Activated CD4-positive, alpha-beta memory T cell treated with anti-CD3 and anti-CD28 coated beads, Interleukin-2, amount 10 ng/mL, durations not matched to agents 7 days and 5 days (primary cell): ENCODE measurements at regions of chr19 and their contacts with region 1.

Region 1: GRCh38 chr19:16371540-16371986 is 46.9 kb downstream of the KLF2 start:
- DNase-seq: peak; percentile 96
- H3K4me3 Mint-ChIP-seq: no peak overlapping the region
- H3K27ac Mint-ChIP-seq: no peak overlapping the region
- H3K4me1 Mint-ChIP-seq: peaks cover 7% of the 10 kb centered on the region
- H3K27me3 Mint-ChIP-seq: peaks cover 2% of the 10 kb centered on the region

Region 2: DNA sequence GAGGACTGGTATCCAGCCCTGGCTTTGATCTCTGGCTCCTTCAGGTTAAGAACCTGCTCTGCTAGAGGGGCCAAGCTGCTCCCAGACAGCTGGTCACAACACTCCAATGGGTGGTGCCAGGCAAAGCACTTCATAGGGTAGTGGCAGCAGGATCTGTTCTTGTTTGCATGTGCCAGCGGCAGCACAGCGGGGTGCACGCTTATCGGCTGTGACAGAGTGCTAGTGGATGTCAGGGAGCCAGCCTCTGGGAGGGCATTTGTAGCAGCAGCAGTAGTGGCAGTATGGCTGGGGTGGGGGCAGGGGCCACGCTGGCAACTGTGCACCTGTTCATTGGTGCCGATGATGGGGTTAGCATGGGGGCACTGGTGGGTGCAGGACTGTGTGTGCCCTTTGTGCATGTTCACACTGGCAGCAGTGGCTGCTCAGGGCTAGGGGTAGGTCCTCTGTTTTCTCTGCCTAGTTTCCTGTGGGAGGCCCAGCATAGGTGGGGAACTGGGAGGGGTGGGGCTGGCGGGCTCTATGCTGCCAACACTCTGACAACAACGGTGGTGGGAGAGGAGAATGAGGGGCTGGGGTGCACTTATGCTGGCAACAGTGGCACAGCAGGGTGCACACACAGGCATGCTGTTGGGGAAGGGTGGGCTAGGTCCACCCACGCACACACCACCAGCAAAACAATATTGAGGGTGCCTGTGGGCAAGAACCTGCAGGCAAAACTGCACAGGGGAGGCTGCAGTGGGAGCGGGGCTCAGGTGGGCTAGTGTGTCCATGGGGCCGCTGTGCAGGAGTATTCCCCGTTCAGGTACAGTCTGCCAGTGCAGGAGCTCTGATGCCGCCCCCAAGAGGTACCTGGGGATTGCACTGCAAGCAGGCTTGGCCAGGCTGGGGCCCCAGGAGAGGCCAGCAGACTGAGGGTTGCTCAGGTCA is 154.6 kb before region 1 on chr19:
- CTCF ChIA-PET with region 1: no interaction called
- POLR2A ChIA-PET with region 1: no interaction called
- DNase-seq: no peak
- H3K4me3 Mint-ChIP-seq: no peak overlapping the region
- H3K27ac Mint-ChIP-seq: peak overlapping the region; percentile 60
- H3K4me1 Mint-ChIP-seq: peaks cover 29% of the 10 kb centered on the region
- H3K27me3 Mint-ChIP-seq: no peaks in the 10 kb centered on the region

Region 3: DNA sequence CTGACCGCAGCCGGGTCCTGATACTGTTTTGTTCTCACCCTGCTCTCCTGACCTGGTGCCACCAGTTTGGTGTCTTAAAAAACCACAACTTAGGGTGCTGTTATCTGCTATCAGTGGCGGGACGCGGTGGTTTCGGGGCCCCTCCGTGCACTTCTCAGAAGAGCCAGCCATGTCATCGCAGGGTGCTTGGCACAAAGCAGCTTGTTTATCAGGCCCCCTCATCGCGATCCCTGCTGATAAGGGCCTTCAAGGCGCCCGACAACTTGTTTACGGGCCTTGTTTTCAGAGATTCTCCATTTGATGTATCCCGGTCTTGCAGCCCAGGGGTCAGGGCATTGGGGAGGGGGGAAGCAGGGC is 105.0 kb before region 1 on chr19:
- CTCF ChIA-PET with region 1: no interaction called
- POLR2A ChIA-PET with region 1: interaction called, 23 read pairs
- DNase-seq: peak; percentile 86
- H3K4me3 Mint-ChIP-seq: peak overlapping the region; percentile 2
- H3K27ac Mint-ChIP-seq: peak overlapping the region; percentile 76
- H3K4me1 Mint-ChIP-seq: peaks cover 62% of the 10 kb centered on the region
- H3K27me3 Mint-ChIP-seq: peaks cover 11% of the 10 kb centered on the region

Region 4: GRCh38 chr19:16338470-16339360 is 32.8 kb before region 1 on chr19:
- CTCF ChIA-PET with region 1: interaction called, 34 read pairs
- POLR2A ChIA-PET with region 1: interaction called, 3,221 read pairs
- DNase-seq: peak; percentile 83
- H3K4me3 Mint-ChIP-seq: peak overlapping the region; percentile 67
- H3K27ac Mint-ChIP-seq: peak overlapping the region; percentile 85
- H3K4me1 Mint-ChIP-seq: peaks cover 70% of the 10 kb centered on the region
- H3K27me3 Mint-ChIP-seq: peaks cover 4% of the 10 kb centered on the region

Region 5: DNA sequence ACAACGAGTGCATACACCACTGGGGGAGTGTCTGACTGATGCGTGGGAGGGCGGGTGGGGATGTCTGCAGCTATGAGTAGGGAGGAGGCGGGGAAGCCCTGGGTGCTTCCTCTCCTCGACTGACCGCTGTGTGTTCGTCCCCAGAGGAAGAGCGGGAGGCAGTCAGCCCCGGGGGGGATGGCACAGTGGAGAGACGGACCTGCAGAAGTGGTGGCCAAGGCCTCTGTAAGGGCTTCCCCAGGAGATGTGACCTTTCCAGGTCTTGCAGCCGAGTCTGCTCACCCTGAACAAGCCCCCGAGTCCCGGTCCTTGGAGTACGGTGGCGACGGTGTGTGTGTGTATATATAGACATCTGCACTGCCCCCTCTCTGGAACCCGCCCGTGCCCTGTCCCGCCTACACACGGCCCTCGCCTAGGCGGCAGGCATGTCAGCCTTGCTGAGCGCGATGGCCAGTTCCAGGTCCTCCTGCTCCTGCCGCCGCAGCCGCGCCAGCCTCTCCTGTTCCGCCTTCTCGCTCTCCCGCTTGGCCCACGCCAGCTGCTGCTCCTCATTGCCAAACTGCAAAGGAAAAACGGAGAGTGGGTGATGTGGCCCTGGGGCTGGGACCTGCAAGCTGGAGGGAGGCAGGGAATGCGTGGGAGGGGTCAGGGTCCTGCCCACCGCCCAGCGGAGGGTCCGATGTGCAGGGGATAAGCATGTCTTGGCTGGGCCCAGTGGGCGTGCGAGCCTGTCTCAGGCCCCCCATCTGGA is 16.1 kb before region 1 on chr19:
- CTCF ChIA-PET with region 1: interaction called, 41 read pairs
- POLR2A ChIA-PET with region 1: interaction called, 409 read pairs
- DNase-seq: no peak
- H3K4me3 Mint-ChIP-seq: no peak overlapping the region
- H3K27ac Mint-ChIP-seq: peak overlapping the region; percentile 69
- H3K4me1 Mint-ChIP-seq: peaks cover 80% of the 10 kb centered on the region
- H3K27me3 Mint-ChIP-seq: no peaks in the 10 kb centered on the region

Region 6: DNA sequence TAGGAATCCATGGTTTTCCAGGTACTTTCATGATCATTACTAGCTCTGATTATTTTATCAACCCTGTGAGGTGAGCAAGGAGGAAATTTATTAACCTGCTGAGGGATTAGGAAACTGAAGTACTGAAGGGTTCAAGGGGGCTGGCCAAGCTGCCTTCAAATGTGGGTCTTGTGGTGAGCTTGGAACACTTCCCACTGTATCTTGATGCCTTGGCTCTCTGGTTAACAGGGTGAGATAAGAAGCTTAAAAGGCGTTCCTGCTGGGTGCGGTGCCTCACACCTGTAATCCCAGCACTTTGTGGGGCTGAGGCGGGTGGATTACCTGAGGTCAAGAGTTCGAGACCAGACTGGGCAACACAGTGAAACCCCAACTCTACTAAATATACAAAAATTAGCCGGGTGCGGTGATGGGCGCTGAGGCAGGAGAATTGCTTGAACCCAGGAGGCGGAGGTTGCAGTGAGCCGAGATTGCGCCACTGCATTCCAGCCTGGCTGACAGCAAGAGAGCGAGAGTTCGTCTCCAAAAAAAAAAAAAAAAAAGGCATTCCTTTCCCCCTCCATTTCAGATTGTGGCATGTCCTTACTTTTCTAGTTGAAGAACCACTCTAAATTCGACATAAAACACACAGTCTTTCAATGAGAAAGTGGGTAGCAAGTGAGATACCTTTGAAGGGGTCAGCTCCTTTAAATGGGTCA is 23.3 kb after region 1 on chr19:
- CTCF ChIA-PET with region 1: no interaction called
- POLR2A ChIA-PET with region 1: no interaction called
- DNase-seq: no peak
- H3K4me3 Mint-ChIP-seq: no peak overlapping the region
- H3K27ac Mint-ChIP-seq: no peak overlapping the region
- H3K4me1 Mint-ChIP-seq: peaks cover 7% of the 10 kb centered on the region
- H3K27me3 Mint-ChIP-seq: no peaks in the 10 kb centered on the region